CD4-positive, alpha-beta memory T cell (primary cell): ENCODE measurements at regions of chr4 and their contacts with region 1.

Region 1: DNA sequence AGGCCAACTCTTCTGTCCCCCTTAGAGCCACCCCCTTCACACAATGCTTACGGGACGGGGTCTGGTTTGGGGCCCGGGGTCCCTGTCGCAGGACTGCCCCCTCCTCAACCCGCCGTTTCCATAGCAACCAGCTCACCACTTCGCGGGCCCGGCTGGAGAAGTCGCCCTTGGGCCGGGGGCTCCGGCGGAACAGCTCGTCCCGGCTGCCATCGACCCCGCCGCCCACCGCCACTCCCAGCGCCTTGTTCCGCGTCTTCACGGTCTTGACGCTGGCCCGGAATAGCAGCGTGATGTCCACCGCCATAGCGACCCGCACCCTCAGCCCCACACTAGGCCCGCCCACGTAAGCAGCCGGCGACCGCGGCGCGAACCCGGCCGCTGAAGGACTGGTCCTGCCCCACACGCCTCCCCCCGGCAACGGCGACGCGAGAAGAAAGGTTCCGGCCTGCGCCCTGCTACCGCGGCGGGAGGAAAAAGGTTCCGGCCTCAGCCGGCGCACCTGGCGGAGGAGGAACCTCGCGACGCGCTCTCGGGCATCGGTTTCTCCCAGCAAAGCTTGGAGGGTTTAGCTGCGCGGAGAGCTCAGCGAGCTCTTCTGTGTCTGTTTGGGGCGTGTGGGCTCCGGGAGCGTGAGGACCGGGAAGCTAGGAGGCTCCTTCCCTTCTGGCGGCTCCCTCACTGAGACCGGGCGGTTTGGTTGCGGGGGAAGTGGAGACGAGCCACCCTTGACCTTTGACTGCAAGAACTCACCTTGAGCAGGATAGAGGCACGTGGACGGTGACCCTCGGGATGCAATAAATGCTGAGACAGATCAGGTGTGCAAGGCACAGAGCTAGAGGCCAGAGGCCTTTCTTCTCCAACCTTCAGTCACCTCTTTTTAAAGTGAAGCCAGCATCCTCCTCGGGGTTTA is at the start of gene STX18:
- DNase-seq: peak; percentile 83 to 88 (median 85)
- H3K4me3 ChIP-seq: peak within 1 kb of the TSS; percentile 77 to 88
- H3K4me3 Mint-ChIP-seq: peak within 1 kb of the TSS; percentile 92 to 99 (median 96)
- H3K27ac ChIP-seq: peak within 1 kb of the TSS; percentile 63
- H3K27ac Mint-ChIP-seq: peak within 1 kb of the TSS; percentile 92 to 97 (median 95)
- H3K4me1 ChIP-seq: peaks cover 35% of the 10 kb centered on the region
- H3K4me1 Mint-ChIP-seq: peaks cover 28 to 72% (median 50%) of the 10 kb centered on the region in 4 donors
- H3K27me3 ChIP-seq: no peaks in the 10 kb centered on the region
- H3K27me3 Mint-ChIP-seq: no peaks in the 10 kb centered on the region
- total RNA-seq, gene STX18: 33.2 to 34.5 TPM

Region 2: GRCh38 chr4:4289941-4290850 is 251.7 kb before region 1 on chr4 and contains the starts of genes LYAR and ZBTB49:
- CTCF ChIA-PET with region 1: no interaction called
- POLR2A ChIA-PET with region 1: no interaction called
- intact Hi-C with region 1: loop called (anchors 5 kb)
- DNase-seq: peak; percentile 96 to 98 (median 97)
- H3K4me3 ChIP-seq: peak within 1 kb of the TSS; percentile 86 to 93
- H3K4me3 Mint-ChIP-seq: peak within 1 kb of the TSS; percentile 93 to 98 (median 96)
- H3K27ac ChIP-seq: peak within 1 kb of the TSS; percentile 76
- H3K27ac Mint-ChIP-seq: peak within 1 kb of the TSS; percentile 83 to 96 (median 94)
- H3K4me1 ChIP-seq: peaks cover 30% of the 10 kb centered on the region
- H3K4me1 Mint-ChIP-seq: peaks cover 48 to 83% (median 64%) of the 10 kb centered on the region in 4 donors
- H3K27me3 ChIP-seq: no peaks in the 10 kb centered on the region
- H3K27me3 Mint-ChIP-seq: no peaks in the 10 kb centered on the region
- total RNA-seq, gene LYAR: 74.5 to 79.8 TPM
- total RNA-seq, gene ZBTB49: 18.5 to 20.0 TPM

Region 3: GRCh38 chr4:4461850-4462249 is 80.1 kb before region 1 on chr4:
- CTCF ChIA-PET with region 1: interaction called, 4 read pairs
- POLR2A ChIA-PET with region 1: interaction called, 22 read pairs
- intact Hi-C with region 1: no loop called
- DNase-seq: peak; percentile 73 to 91 (median 87)
- H3K4me3 ChIP-seq: no peak overlapping the region
- H3K4me3 Mint-ChIP-seq: peak overlapping the region; percentile 73 to 91 (median 82)
- H3K27ac ChIP-seq: peak overlapping the region; percentile 52
- H3K27ac Mint-ChIP-seq: peak overlapping the region; percentile 92 to 99 (median 95)
- H3K4me1 ChIP-seq: peaks cover 48% of the 10 kb centered on the region
- H3K4me1 Mint-ChIP-seq: peaks cover 34 to 65% (median 51%) of the 10 kb centered on the region in 4 donors
- H3K27me3 ChIP-seq: no peaks in the 10 kb centered on the region
- H3K27me3 Mint-ChIP-seq: no peaks in the 10 kb centered on the region

Region 4: GRCh38 chr4:4575273-4576211 is 33.6 kb after region 1 on chr4:
- CTCF ChIA-PET with region 1: interaction called, 13 read pairs
- POLR2A ChIA-PET with region 1: interaction called, 24 read pairs
- intact Hi-C with region 1: loop called (anchors 2 kb)
- DNase-seq: peak; percentile 59 to 74 (median 70)
- H3K4me3 ChIP-seq: peak overlapping the region; percentile 26 to 63
- H3K4me3 Mint-ChIP-seq: peak overlapping the region; percentile 83 to 91 (median 88)
- H3K27ac ChIP-seq: peak overlapping the region; percentile 55
- H3K27ac Mint-ChIP-seq: peak overlapping the region; percentile 42 to 98 (median 89)
- H3K4me1 ChIP-seq: peaks cover 9% of the 10 kb centered on the region
- H3K4me1 Mint-ChIP-seq: peaks cover 12 to 21% (median 13%) of the 10 kb centered on the region in 4 donors
- H3K27me3 ChIP-seq: no peaks in the 10 kb centered on the region
- H3K27me3 Mint-ChIP-seq: no peaks in the 10 kb centered on the region